Mammary epithelial cell (primary cell): ENCODE measurements at regions of chr10 and their contacts with region 1.

Region 1: GRCh38 chr10:104218751-104219150 is 13.4 kb downstream of the CFAP43 start:
- DNase-seq: no peak
- H3K4me3 ChIP-seq: no peak overlapping the region
- H3K27ac ChIP-seq: no peak overlapping the region
- H3K4me1 ChIP-seq: no peaks in the 10 kb centered on the region
- H3K27me3 ChIP-seq: no peaks in the 10 kb centered on the region
- CTCF ChIP-seq: no peak

Region 2: DNA sequence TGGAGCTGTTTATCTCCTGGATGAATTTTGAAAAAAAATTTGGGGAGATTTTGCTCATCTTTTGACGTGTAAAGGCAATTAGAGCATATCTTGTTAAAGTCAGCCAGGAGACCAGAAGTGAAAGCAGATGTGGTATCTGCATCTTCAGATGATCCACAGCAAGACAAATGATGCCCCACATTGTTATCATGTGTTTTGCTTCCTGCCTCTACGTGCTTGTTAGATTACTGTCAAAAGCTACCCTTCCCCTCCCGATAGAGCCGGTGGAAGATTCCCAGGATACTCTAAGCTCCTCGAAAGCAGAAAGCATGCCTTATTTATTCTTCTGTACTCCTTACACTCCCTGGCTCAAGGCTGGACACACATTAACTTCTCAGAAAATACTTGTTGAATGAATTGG is 146.0 kb before region 1 on chr10:
- CTCF ChIA-PET with region 1: no interaction called
- dilution Hi-C with region 1: loop called (anchors 5 kb)
- in situ Hi-C with region 1: no loop called
- intact Hi-C with region 1: no loop called
- DNase-seq: no peak
- H3K4me3 ChIP-seq: no peak overlapping the region
- H3K27ac ChIP-seq: no peak overlapping the region
- H3K4me1 ChIP-seq: no peaks in the 10 kb centered on the region
- H3K27me3 ChIP-seq: no peaks in the 10 kb centered on the region
- CTCF ChIP-seq: no peak

Region 3: GRCh38 chr10:104144931-104145330 is 73.8 kb before region 1 on chr10:
- CTCF ChIA-PET with region 1: interaction called, 4 read pairs
- dilution Hi-C with region 1: loop called (anchors 5 kb)
- in situ Hi-C with region 1: no loop called
- intact Hi-C with region 1: no loop called
- DNase-seq: no peak
- H3K4me3 ChIP-seq: no peak overlapping the region
- H3K27ac ChIP-seq: no peak overlapping the region
- H3K4me1 ChIP-seq: no peaks in the 10 kb centered on the region
- H3K27me3 ChIP-seq: no peaks in the 10 kb centered on the region
- CTCF ChIP-seq: no peak

Region 4: GRCh38 chr10:104308439-104308903 is 89.7 kb after region 1 on chr10:
- CTCF ChIA-PET with region 1: no interaction called
- dilution Hi-C with region 1: no loop called
- in situ Hi-C with region 1: no loop called
- intact Hi-C with region 1: no loop called
- DNase-seq: no peak
- H3K4me3 ChIP-seq: no peak overlapping the region
- H3K27ac ChIP-seq: no peak overlapping the region
- H3K4me1 ChIP-seq: peaks cover 15% of the 10 kb centered on the region
- H3K27me3 ChIP-seq: no peaks in the 10 kb centered on the region
- CTCF ChIP-seq: no peak